ENCODE measurements at regions of chr11 and their contacts with region 1.

Region 1: GRCh38 chr11:99015634-99016454 is 4.9 kb upstream of the CNTN5 start:
- DNase-seq: no peak
- ATAC-seq: peak; percentile 18; the same call in 1 of the 2 replicates
- H3K4me3 Mint-ChIP-seq: no peak overlapping the region
- H3K27ac Mint-ChIP-seq: no peak overlapping the region
- H3K4me1 Mint-ChIP-seq: peaks cover 2% of the 10 kb centered on the region; the same call in 1 of the 2 replicates
- H3K27me3 Mint-ChIP-seq: peaks cover 18% of the 10 kb centered on the region
- CTCF ChIP-seq: peak; percentile 75; the same call in 1 of the 2 replicates

Region 2: DNA sequence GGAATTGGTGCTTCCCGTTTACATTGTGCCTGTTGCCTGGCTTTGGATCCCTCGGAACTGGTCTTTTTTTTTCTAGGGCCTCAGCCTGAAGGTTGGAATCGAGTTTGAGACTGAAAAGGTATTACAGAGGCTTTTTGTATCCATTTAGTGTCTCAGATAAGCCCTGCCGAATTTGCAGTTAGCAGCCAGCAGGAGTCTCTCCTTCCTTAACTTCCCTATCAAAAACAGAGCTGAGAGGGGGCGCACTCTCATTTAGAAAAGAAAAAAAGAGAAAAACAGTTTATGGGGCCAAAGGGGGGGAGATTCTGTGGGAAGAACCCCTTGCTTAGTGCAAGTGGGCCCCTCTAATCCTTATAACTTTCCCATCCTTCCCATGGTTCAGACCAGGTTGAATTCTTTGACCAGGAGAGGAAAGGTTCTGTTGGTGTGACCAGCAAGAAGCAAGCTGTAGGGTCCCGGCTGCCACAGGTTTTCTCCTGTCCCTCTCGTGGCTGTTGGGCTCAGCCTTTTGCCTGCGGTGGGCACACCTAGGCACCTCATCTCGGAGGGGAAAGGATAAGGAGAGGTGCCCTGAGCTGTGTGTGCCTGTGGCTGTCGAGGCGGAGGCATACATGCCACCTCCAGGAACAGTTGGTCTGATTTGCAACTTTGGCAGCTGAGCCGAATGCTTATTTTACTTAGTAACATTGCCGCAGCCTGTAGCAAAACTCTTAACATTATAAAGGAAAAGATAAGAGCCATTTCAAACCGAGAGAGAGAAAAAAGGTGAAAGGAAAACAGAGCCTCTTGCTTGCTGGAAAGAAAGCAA is 560.1 kb before region 1 on chr11:
- CTCF ChIA-PET with region 1: interaction called, 16 read pairs
- POLR2A ChIA-PET with region 1: no interaction called
- DNase-seq: peak; percentile 24
- ATAC-seq: peak; percentile 88
- H3K4me3 Mint-ChIP-seq: no peak overlapping the region
- H3K27ac Mint-ChIP-seq: peak overlapping the region; percentile 60; the same call in 1 of the 2 replicates
- H3K4me1 Mint-ChIP-seq: peaks cover 18% of the 10 kb centered on the region
- H3K27me3 Mint-ChIP-seq: no peaks in the 10 kb centered on the region
- CTCF ChIP-seq: no peak

Region 3: DNA sequence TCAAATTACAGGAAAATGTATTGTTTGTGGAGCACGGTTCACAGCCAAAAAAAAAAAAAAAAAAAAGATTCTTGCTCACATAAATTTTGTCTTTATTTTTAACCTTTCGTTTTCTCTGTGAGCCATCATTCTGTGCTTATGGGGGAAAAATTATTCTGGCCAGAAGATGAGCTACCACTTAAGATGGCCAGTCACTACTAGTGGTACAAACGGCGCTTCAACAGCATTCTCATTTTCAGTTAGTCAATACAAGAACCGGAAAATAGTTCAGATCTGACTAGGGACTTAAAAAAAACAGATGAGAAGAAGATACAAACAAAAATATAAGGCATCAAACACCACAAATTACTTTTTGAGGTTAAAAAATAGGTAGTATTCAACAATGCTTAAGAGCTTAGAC is 153.7 kb before region 1 on chr11:
- CTCF ChIA-PET with region 1: no interaction called
- POLR2A ChIA-PET with region 1: no interaction called
- DNase-seq: no peak
- ATAC-seq: no peak
- H3K4me3 Mint-ChIP-seq: no peak overlapping the region
- H3K27ac Mint-ChIP-seq: no peak overlapping the region
- H3K4me1 Mint-ChIP-seq: 0 out of 2 replicates have a peak, but pooled peaks cover 3% of the 10 kb centered on the region
- H3K27me3 Mint-ChIP-seq: no peaks in the 10 kb centered on the region
- CTCF ChIP-seq: no peak

Region 4: GRCh38 chr11:98874050-98874449 is 141.8 kb before region 1 on chr11:
- CTCF ChIA-PET with region 1: no interaction called
- POLR2A ChIA-PET with region 1: no interaction called
- DNase-seq: no peak
- ATAC-seq: no peak
- H3K4me3 Mint-ChIP-seq: no peak overlapping the region
- H3K27ac Mint-ChIP-seq: no peak overlapping the region
- H3K4me1 Mint-ChIP-seq: peaks cover 2% of the 10 kb centered on the region; the same call in 1 of the 2 replicates
- H3K27me3 Mint-ChIP-seq: no peaks in the 10 kb centered on the region
- CTCF ChIP-seq: no peak